ENCODE measurements at regions of chr6 and their contacts with region 1.

Region 1: DNA sequence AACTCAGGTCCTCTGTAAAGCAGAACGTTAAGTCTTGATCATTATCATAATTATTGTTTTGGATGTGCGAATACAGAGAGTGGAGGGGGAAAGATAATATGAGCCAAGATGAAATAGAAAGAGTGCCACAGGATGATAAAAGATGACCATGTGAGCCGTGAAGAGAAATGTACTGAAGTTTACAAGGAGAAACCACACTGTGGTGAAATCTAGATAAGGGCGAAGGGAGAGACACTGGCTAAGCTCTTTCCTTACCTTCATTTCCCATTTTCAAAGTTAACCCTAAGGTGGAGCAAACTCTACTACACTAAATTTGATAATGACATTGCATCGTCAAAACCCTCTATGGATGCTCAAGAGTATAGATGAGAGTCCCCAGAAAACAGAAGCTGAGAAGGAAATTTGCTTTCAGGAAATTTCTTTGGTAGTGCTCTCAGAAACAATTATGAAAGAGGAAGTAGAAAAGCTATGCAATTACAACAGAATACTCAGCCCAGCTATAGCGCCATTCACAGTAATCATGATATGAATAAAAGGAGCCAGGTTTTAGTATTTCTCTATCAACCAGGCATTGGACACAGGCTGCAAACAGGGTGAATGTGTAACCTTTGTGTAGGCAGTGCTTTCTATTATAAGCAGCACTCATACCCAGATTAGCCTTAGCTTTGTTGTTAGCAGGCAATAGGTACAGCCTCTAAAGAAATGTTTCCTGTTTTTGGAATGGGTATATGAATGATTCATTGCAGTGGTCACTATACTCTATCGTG is 1080.7 kb downstream of the GRIK2 start:
- DNase-seq: no peak
- ATAC-seq: no peak
- H3K4me3 ChIP-seq: no peak overlapping the region
- H3K27ac ChIP-seq: no peak overlapping the region
- H3K4me1 ChIP-seq: no peaks in the 10 kb centered on the region
- H3K27me3 ChIP-seq: no peaks in the 10 kb centered on the region
- CTCF ChIP-seq: no peak
- POLR2A ChIP-seq: no peak

Region 2: DNA sequence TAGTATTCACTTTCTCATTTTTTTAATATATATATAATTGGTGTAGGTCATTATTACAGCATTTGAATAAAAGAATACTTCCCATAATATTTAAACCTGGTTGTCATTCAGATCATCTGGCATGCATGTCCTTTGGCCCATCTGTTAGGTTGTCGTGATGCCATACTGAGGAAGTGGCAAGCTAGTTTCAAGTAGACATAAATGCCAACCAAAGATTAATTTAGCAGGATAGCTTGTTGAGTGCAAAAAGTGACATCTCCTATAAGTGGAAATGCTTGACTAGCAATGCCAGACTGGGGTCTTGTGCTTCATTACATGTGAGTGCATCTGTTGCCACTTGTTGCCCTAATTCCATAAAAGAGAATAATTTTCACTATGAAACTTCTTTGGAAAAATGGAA is 36.1 kb before region 1 on chr6:
- in situ Hi-C with region 1: no loop called
- intact Hi-C with region 1: loop called (anchors 2 kb)
- DNase-seq: no peak
- ATAC-seq: no peak
- H3K4me3 ChIP-seq: no peak overlapping the region
- H3K27ac ChIP-seq: no peak overlapping the region
- H3K4me1 ChIP-seq: no peaks in the 10 kb centered on the region
- H3K27me3 ChIP-seq: no peaks in the 10 kb centered on the region
- CTCF ChIP-seq: no peak
- POLR2A ChIP-seq: no peak